Aorta (tissue), 5 donors: ENCODE measurements at regions of chr5 and their contacts with region 1.

Region 1: GRCh38 chr5:15105796-15106393 is 234.3 kb upstream of the ANKH start:
- DNase-seq: no peak
- ATAC-seq: peak; percentile 79
- H3K4me3 ChIP-seq: no peak overlapping the region
- H3K27ac ChIP-seq: no peak overlapping the region
- H3K4me1 ChIP-seq: no peaks in the 10 kb centered on the region
- H3K27me3 ChIP-seq: no peaks in the 10 kb centered on the region

Region 2: DNA sequence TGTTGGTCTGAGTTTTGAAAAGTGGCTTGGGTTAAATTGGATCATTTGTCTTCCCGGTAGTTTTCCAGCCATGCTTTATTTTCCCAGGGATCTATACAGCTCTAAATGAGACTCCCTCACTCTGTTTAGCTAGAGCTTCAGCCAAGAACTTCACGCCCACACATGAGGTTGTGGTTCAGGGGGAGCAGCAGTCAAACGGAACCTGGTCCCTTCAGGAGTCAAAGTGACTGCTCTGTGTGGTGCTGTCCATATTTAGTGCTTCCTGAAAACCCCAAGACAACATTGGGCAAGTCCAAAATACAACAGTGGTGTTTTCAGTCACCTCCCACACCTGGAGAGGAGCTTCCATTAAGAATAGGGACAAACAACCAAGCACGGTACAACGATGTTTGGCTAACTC is 324.8 kb before region 1 on chr5:
- intact Hi-C with region 1: no loop called
- DNase-seq: no peak
- ATAC-seq: no peak
- H3K4me3 ChIP-seq: no peak overlapping the region
- H3K27ac ChIP-seq: peak overlapping the region in 1 of 2 donors; percentile 37
- H3K4me1 ChIP-seq: peaks cover 0 to 5% of the 10 kb centered on the region in 2 donors
- H3K27me3 ChIP-seq: no peaks in the 10 kb centered on the region

Region 3: DNA sequence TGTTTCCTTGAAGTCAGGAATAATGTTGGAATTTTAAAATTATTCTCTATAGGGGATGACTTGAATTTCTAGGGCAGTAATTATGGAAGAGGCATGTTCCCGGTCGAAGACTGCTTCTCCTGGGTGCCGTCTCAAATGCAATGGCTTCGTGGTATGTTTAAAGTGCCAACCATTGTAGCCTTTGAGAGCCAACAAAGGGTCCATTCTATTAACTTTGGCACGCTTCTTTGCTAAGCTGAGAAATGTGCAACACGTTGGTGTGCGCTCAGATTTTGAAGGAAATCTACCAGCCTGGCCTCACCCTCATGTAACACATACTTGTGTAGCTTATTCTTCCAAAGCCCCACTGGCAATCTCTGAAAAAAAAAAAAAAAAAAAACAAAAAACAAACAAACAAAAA is 13.1 kb before region 1 on chr5:
- intact Hi-C with region 1: no loop called
- DNase-seq: no peak
- ATAC-seq: no peak
- H3K4me3 ChIP-seq: no peak overlapping the region
- H3K27ac ChIP-seq: no peak overlapping the region
- H3K4me1 ChIP-seq: no peaks in the 10 kb centered on the region
- H3K27me3 ChIP-seq: no peaks in the 10 kb centered on the region

Region 4: DNA sequence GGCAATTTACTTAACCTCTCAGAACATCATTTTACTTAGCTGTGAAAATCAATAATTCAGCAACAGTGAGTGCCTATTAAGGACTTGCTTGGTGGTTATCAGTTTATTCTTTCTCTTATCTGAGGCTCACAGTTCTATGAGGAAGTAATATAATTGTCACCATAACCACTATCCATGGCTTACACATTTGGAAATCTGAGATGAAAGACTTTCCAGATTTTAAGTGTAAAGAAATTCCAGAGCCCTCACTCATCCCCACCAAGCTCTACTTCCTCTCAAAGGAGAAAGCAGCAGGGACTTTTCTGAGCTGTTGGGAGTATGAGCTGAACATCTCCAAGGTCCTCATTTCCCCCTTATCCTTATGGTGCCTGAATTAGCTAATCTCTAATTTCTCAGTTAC is 715.6 kb after region 1 on chr5:
- intact Hi-C with region 1: loop called in 1 of 2 experiments (anchors 10 kb)
- DNase-seq: no peak
- ATAC-seq: no peak
- H3K4me3 ChIP-seq: no peak overlapping the region
- H3K27ac ChIP-seq: no peak overlapping the region
- H3K4me1 ChIP-seq: peaks cover 0 to 5% of the 10 kb centered on the region in 2 donors
- H3K27me3 ChIP-seq: no peaks in the 10 kb centered on the region

Region 5: GRCh38 chr5:15995341-15996052 is 889.6 kb after region 1 on chr5:
- intact Hi-C with region 1: loop called (anchors 2 to 10 kb)
- DNase-seq: no peak
- ATAC-seq: no peak
- H3K4me3 ChIP-seq: no peak overlapping the region
- H3K27ac ChIP-seq: no peak overlapping the region
- H3K4me1 ChIP-seq: no peaks in the 10 kb centered on the region
- H3K27me3 ChIP-seq: no peaks in the 10 kb centered on the region